ENCODE measurements at regions of chr17 and their contacts with region 1.

Region 1: GRCh38 chr17:68019675-68020408 is 15.7 kb upstream of the KPNA2 start:
- DNase-seq: peak; percentile 90 to 99 (median 97)

Region 2: GRCh38 chr17:67993596-67994361 is 26.1 kb before region 1 on chr17:
- intact Hi-C with region 1: loop called (anchors 2 kb)
- DNase-seq: peak; percentile 13 to 91 (median 82)

Region 3: DNA sequence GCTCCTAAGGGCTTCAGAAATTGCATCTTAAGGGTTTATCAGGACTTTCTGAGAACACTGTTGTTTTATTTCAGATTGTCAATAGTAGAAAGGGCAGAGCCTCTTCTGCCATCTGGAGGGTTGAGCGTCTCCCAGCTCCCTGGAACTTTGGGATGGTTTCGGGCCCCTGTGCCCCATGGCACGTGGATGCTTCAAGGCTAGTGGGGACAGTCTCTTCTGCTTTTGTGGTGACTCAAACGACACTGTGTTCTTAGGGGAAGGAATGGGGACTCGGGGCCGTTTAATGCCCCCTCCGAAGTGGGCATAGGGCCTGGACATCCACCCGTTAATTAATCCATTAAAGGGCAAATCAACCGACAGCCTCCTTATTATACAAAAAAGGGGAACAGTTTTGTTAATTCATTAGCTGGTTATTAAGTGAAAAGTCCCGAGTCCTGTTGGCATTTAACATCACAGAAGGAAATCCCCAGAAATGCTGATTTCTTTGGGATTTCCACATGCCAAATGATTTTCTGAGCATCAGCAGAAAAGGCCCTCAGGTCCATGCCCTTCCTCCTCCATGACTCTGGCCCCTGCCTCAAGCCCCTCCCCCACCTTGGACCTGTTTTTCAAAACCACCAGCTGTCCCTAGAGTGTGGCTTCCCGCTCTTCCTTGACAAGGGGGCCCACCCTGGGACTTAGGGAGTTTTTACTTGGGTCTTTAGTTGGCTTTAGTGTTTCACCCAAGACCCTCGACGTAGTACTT is 340.1 kb after region 1 on chr17:
- intact Hi-C with region 1: no loop called
- DNase-seq: no peak

Measured in head of caudate nucleus (tissue), 42 donors.